ENCODE measurements at regions of chr3 and their contacts with region 1.

Region 1: GRCh38 chr3:33636125-33636850 is 81.8 kb downstream of the CLASP2 start:
- DNase-seq: no peak
- ATAC-seq: no peak
- H3K4me3 ChIP-seq: no peak overlapping the region
- H3K27ac ChIP-seq: no peak overlapping the region
- H3K4me1 ChIP-seq: peaks cover 6% of the 10 kb centered on the region
- H3K27me3 ChIP-seq: no peaks in the 10 kb centered on the region
- CTCF ChIP-seq: peak; percentile 65

Region 2: GRCh38 chr3:33787328-33788009 is 151.2 kb after region 1 on chr3:
- intact Hi-C with region 1: loop called (anchors 5 kb)
- DNase-seq: peak; percentile 53
- ATAC-seq: peak; percentile 88 to 89
- H3K4me3 ChIP-seq: peak overlapping the region; percentile 20
- H3K27ac ChIP-seq: no peak overlapping the region
- H3K4me1 ChIP-seq: peaks cover 5% of the 10 kb centered on the region
- H3K27me3 ChIP-seq: no peaks in the 10 kb centered on the region
- CTCF ChIP-seq: peak; percentile 82

Region 3: DNA sequence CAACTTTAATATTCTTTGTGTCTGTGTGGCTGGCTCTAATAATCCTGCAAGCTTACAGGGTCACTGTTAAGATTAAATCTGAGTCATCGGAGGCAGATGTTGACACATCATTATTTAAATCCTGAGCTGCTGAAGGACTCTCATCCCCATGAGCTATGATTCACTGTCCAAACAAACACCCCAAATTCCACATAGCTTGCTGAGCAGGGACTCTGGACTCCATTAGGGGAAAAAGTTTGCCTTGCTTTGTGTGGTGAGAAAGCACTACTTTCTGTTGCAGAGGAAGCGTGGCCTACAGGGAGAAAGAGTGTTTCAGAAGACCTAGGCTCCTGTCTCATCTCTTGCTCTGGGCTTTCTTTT is 375.8 kb after region 1 on chr3:
- intact Hi-C with region 1: no loop called
- DNase-seq: no peak
- ATAC-seq: peak; percentile 68 to 74
- H3K4me3 ChIP-seq: no peak overlapping the region
- H3K27ac ChIP-seq: no peak overlapping the region
- H3K4me1 ChIP-seq: peaks cover 10% of the 10 kb centered on the region
- H3K27me3 ChIP-seq: no peaks in the 10 kb centered on the region
- CTCF ChIP-seq: no peak